Left cardiac atrium (tissue), 4 donors: ENCODE measurements at regions of chrX and their contacts with region 1.

Region 1: GRCh38 chrX:9464435-9465371 is at the start of gene TBL1X:
- DNase-seq: peak; percentile 71
- ATAC-seq: peak; percentile 58 to 75
- total RNA-seq, gene TBL1X: 9.4 to 16.7 TPM

Region 2: GRCh38 chrX:8484360-8484949 is 980.2 kb before region 1 on chrX:
- intact Hi-C with region 1: no loop called
- DNase-seq: no peak
- ATAC-seq: no peak

Region 3: GRCh38 chrX:8927701-8928100 is 537.0 kb before region 1 on chrX:
- intact Hi-C with region 1: no loop called
- DNase-seq: no peak
- ATAC-seq: no peak

Region 4: GRCh38 chrX:9341291-9342201 is 123.2 kb before region 1 on chrX:
- intact Hi-C with region 1: loop called (anchors 2 to 5 kb)
- DNase-seq: peak; percentile 70
- ATAC-seq: peak; percentile 29 to 39

Region 5: GRCh38 chrX:9677098-9677739 is 212.5 kb after region 1 on chrX:
- intact Hi-C with region 1: loop called in 1 of 2 experiments (anchors 10 kb)
- DNase-seq: no peak
- ATAC-seq: no peak

Region 6: GRCh38 chrX:9785944-9786797 is 321.5 kb after region 1 on chrX and contains the start of gene SHROOM2:
- intact Hi-C with region 1: no loop called
- DNase-seq: peak; percentile 33
- ATAC-seq: peak; percentile 43 to 58
- total RNA-seq, gene SHROOM2: 1.1 to 2.7 TPM

Region 7: GRCh38 chrX:10341309-10341708 is 876.6 kb after region 1 on chrX:
- intact Hi-C with region 1: no loop called
- DNase-seq: no peak
- ATAC-seq: no peak